ENCODE measurements at regions of chr1 and their contacts with region 1.

Region 1: DNA sequence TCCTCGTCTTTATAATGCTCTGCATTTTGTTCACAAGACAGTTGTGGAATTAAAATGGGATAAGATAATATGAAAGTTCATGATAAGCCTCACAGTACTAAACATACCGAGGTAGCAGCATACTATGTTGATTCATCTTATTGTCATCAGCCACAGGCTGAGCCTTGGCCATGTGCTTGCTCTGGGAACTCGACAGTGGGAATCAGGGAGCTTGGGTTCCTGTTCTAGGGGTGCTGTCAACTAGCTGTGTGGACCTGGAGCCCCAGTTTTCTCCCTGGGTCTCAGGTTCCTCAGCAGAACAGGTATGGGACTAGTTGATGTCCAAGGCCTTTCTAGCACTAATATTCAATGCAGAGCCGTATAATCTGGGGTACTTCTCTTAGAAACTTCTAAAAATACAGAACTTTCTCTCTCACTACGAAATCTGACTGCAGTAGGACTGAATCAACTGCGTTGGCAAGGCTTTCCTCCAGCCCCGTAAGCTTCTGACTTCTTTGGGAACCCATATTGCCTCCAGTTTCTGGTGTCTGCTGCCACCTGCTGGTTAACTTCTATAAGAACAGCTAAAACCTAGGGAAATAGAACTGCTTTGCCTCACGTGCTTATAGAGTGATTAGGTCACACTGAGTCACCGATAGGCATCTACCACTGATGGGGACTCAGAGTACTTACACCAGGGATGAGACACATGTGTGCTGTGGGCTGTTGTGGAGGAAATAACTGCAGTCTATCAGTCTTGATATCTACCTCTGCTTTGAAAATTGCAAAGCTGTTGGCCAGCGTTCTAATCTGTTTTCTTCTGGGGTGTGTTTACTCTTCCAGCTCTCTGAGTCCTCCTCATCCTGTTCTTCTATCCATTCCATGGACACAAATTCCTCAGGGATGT is 110.9 kb downstream of the RGL1 start:
- DNase-seq: peak; percentile 99
- H3K4me3 Mint-ChIP-seq: peak overlapping the region; percentile 27
- H3K27ac Mint-ChIP-seq: peak overlapping the region; percentile 55
- H3K4me1 Mint-ChIP-seq: peaks cover 13% of the 10 kb centered on the region
- H3K27me3 Mint-ChIP-seq: no peaks in the 10 kb centered on the region
- CTCF ChIP-seq: peak; percentile 90

Region 2: GRCh38 chr1:183471743-183472487 is 444.0 kb before region 1 on chr1:
- CTCF ChIA-PET with region 1: no interaction called
- POLR2A ChIA-PET with region 1: no interaction called
- intact Hi-C with region 1: loop called (anchors 1 kb)
- DNase-seq: peak; percentile 98
- H3K4me3 Mint-ChIP-seq: peak overlapping the region; percentile 86
- H3K27ac Mint-ChIP-seq: peak overlapping the region; percentile 98
- H3K4me1 Mint-ChIP-seq: peaks cover 21% of the 10 kb centered on the region
- H3K27me3 Mint-ChIP-seq: no peaks in the 10 kb centered on the region
- CTCF ChIP-seq: no peak

Region 3: GRCh38 chr1:183635606-183636333 is 280.1 kb before region 1 on chr1 and contains the start of gene ARPC5:
- CTCF ChIA-PET with region 1: interaction called, 32 read pairs
- POLR2A ChIA-PET with region 1: interaction called, 24 read pairs
- intact Hi-C with region 1: loop called (anchors 1 kb)
- DNase-seq: peak; percentile 99
- H3K4me3 Mint-ChIP-seq: peak within 1 kb of the TSS; percentile 100
- H3K27ac Mint-ChIP-seq: peak within 1 kb of the TSS; percentile 97
- H3K4me1 Mint-ChIP-seq: peaks cover 15% of the 10 kb centered on the region
- H3K27me3 Mint-ChIP-seq: no peaks in the 10 kb centered on the region
- CTCF ChIP-seq: no peak
- total RNA-seq, gene ARPC5: 195 and 240 TPM in 2 replicates

Region 4: DNA sequence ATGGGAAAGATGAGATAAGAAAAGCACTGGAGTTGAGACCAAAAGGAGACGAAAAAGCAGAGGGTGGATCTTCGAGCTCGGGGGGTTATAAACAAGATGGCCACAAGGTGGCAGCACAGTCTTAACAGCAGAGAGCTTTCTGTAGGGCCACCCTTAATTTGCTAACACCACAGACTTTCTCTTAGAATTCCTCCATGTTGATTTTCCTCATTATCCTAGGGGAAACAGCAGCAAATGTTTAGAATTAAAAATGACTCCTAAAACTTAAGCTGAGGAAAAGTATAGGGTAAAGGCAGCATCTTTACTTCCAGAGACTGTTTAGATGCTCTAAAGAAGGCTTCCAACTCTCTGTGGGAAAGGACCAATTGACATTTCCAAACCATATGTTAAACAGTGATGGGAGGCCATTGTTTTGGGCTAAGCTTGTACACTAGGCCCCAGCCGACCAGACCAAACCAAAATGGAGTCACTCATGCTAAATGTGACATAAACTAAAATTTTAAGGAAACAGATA is 260.2 kb before region 1 on chr1:
- CTCF ChIA-PET with region 1: interaction called, 225 read pairs
- POLR2A ChIA-PET with region 1: interaction called, 36 read pairs
- intact Hi-C with region 1: loop called (anchors 1 kb)
- DNase-seq: peak; percentile 90
- H3K4me3 Mint-ChIP-seq: no peak overlapping the region
- H3K27ac Mint-ChIP-seq: peak overlapping the region; percentile 1
- H3K4me1 Mint-ChIP-seq: peaks cover 19% of the 10 kb centered on the region
- H3K27me3 Mint-ChIP-seq: no peaks in the 10 kb centered on the region
- CTCF ChIP-seq: peak; percentile 92

Region 5: DNA sequence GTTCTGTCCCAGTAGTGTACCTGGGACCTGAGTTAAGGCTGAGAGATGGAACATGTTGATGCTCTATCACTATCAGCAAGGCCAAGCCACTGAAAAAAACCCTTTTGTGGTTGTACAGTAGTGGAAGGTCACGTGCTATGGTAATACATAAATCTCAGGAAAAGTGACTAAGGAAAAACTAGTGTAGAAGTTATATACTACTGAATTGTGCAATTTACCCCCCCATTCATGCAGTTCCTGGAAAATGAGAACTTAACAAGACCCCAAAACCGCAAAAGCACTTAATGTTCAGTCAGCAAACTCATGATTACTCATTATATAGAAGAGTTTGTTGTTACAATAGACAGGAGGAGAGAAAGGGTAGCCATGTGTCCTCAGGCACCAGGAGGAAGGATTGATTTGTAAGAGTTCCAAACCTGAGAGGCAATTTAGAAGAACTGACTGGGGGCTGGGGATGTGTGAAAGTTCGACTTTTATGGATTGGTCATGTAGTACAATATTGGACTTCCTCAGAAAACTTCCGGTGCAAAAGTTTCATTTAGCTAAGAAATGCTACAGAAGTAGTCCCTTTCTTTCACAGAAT is 19.3 kb before region 1 on chr1:
- CTCF ChIA-PET with region 1: interaction called, 29 read pairs
- POLR2A ChIA-PET with region 1: interaction called, 4 read pairs
- intact Hi-C with region 1: no loop called
- DNase-seq: peak; percentile 79
- H3K4me3 Mint-ChIP-seq: no peak overlapping the region
- H3K27ac Mint-ChIP-seq: no peak overlapping the region
- H3K4me1 Mint-ChIP-seq: peaks cover 6% of the 10 kb centered on the region
- H3K27me3 Mint-ChIP-seq: no peaks in the 10 kb centered on the region
- CTCF ChIP-seq: no peak

Region 6: DNA sequence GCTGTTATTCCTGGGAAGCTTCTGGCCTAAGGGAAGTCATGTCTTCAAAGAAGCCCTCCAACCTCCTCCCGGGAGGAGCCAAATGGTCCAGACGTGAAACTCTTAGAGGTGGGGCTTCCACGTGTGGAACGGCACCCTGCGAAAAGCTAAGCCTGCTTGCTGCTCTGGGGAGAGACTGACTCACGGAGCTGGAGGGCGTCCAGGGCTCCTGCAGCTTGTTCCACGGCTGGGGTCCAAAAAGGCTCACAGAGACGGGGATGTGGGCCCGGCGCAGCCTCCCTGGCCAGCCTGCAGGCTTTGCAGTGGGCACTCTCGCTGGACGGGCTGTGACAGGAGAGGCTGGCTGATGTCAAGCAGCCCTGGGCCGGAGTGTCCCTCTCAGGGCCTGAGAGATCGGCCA is 16.5 kb after region 1 on chr1:
- CTCF ChIA-PET with region 1: interaction called, 10 read pairs
- POLR2A ChIA-PET with region 1: interaction called, 4 read pairs
- intact Hi-C with region 1: no loop called
- DNase-seq: peak; percentile 68
- H3K4me3 Mint-ChIP-seq: no peak overlapping the region
- H3K27ac Mint-ChIP-seq: no peak overlapping the region
- H3K4me1 Mint-ChIP-seq: no peaks in the 10 kb centered on the region
- H3K27me3 Mint-ChIP-seq: no peaks in the 10 kb centered on the region
- CTCF ChIP-seq: no peak

Region 7: GRCh38 chr1:184222652-184223052 is 306.8 kb after region 1 on chr1:
- CTCF ChIA-PET with region 1: no interaction called
- POLR2A ChIA-PET with region 1: no interaction called
- intact Hi-C with region 1: loop called (anchors 2 kb)
- DNase-seq: peak; percentile 77
- H3K4me3 Mint-ChIP-seq: peak overlapping the region; percentile 12
- H3K27ac Mint-ChIP-seq: no peak overlapping the region
- H3K4me1 Mint-ChIP-seq: peaks cover 5% of the 10 kb centered on the region
- H3K27me3 Mint-ChIP-seq: peaks cover 15% of the 10 kb centered on the region
- CTCF ChIP-seq: peak; percentile 93

Measured in MCF 10A (cell line).